ENCODE measurements at regions of chr5 and their contacts with region 1.

Region 1: DNA sequence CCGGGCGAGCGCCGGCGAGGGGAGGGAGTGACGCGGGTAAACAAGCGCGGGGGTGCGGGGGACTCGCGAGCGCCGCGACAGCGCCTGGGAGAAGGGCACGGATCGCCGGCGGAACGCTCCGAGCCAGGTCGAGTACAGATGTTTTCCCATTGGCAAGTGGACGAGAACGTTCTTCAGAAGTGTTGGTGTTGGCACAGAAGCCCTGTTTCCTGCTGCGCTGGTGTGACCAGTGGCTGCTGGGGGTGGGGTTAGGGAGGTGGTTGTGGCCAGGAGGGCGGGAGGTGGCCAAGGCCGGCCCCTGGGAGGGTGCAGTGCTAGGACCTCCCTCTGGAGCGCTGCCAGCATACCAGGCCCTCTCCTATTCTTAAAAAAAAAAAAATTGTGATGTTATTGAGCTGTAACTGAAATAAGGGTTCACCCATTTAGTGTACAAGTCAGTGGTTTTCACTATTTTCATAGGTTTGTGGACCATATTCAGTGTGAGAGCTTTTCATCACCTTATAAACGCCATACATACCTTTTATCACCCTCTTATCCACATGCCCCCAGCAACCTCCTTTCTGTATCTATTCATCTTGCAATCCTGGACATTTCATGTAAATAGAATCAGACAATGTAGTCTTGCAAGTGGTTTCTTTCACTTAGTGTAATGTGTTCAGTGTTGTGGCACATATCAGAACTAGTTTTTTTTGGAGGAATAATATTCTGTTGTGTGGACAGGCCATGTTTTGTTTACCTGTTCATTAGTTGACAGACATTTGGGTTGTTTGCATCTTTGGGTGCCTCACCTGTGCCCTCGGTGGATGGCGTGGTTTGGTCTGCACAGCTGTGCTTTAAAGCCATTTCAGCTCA is 1.1 kb downstream of the SQSTM1 start:
- DNase-seq: peak; percentile 81 to 96 (median 91)

Region 2: GRCh38 chr5:179858586-179859427 is 37.0 kb after region 1 on chr5 and contains the start of gene MRNIP:
- intact Hi-C with region 1: loop called (anchors 5 kb)
- DNase-seq: peak; percentile 93 to 99 (median 97)